ENCODE measurements at regions of chr5 and their contacts with region 1.

Region 1: DNA sequence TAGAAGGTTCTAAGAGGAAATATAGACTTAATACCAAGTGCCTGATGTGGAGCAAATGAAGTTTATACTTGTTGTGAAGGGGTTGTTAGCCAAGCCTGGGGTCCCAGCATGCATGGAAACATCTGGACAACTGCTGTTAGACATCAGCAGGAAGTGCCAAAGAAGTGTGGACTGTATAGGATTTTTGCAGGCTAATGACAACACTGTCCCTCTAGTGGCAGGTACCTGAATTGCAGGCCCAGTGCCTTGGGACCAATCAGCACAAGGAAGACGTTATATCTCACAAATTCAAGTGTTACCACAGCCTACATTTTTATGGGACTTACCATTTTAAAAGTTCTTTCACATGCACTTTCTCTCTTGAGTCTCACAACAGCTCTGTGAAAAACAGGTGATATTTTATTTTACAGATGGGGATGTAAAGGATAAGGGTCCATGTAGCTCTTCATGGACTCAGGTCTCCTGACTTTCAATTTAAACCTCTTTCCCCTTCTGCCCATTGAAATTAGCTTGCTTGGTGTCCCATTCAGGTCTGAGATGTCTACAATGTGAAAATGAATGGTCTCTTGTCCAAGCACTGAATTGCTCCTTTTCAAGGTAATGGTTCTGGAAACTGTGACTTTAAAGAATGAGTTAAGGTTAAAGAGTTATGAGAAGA is 89.0 kb upstream of the MAP1B start:
- DNase-seq: peak; percentile 74
- ATAC-seq: peak; percentile 73; the same call in 1 of the 2 replicates
- H3K4me3 ChIP-seq: no peak overlapping the region
- H3K27ac ChIP-seq: no peak overlapping the region
- H3K4me1 ChIP-seq: no peaks in the 10 kb centered on the region
- H3K27me3 ChIP-seq: no peaks in the 10 kb centered on the region
- CTCF ChIP-seq: peak; percentile 88

Region 2: GRCh38 chr5:71782771-71783770 is 235.2 kb before region 1 on chr5:
- CTCF ChIA-PET with region 1: no interaction called
- POLR2A ChIA-PET with region 1: no interaction called
- intact Hi-C with region 1: loop called (anchors 2 kb)
- DNase-seq: peak; percentile 81
- ATAC-seq: peak; percentile 81
- H3K4me3 ChIP-seq: peak overlapping the region; percentile 63
- H3K27ac ChIP-seq: no peak overlapping the region
- H3K4me1 ChIP-seq: peaks cover 5% of the 10 kb centered on the region; the same call in 1 of the 2 replicates
- H3K27me3 ChIP-seq: no peaks in the 10 kb centered on the region
- CTCF ChIP-seq: peak; percentile 85

Region 3: GRCh38 chr5:71828291-71829040 is 189.8 kb before region 1 on chr5:
- CTCF ChIA-PET with region 1: no interaction called
- POLR2A ChIA-PET with region 1: no interaction called
- intact Hi-C with region 1: no loop called
- DNase-seq: peak; percentile 64
- ATAC-seq: peak; percentile 41; the same call in 1 of the 2 replicates
- H3K4me3 ChIP-seq: no peak overlapping the region
- H3K27ac ChIP-seq: peak overlapping the region; percentile 53
- H3K4me1 ChIP-seq: peaks cover 28% of the 10 kb centered on the region
- H3K27me3 ChIP-seq: no peaks in the 10 kb centered on the region
- CTCF ChIP-seq: no peak

Region 4: GRCh38 chr5:71938895-71939294 is 79.4 kb before region 1 on chr5:
- CTCF ChIA-PET with region 1: interaction called, 4 read pairs
- POLR2A ChIA-PET with region 1: no interaction called
- intact Hi-C with region 1: loop called (anchors 5 kb)
- DNase-seq: peak; percentile 75
- ATAC-seq: peak; percentile 95
- H3K4me3 ChIP-seq: peak overlapping the region; percentile 1; the same call in 1 of the 2 replicates
- H3K27ac ChIP-seq: peak overlapping the region; percentile 36
- H3K4me1 ChIP-seq: peaks cover 9% of the 10 kb centered on the region
- H3K27me3 ChIP-seq: no peaks in the 10 kb centered on the region
- CTCF ChIP-seq: no peak

Region 5: DNA sequence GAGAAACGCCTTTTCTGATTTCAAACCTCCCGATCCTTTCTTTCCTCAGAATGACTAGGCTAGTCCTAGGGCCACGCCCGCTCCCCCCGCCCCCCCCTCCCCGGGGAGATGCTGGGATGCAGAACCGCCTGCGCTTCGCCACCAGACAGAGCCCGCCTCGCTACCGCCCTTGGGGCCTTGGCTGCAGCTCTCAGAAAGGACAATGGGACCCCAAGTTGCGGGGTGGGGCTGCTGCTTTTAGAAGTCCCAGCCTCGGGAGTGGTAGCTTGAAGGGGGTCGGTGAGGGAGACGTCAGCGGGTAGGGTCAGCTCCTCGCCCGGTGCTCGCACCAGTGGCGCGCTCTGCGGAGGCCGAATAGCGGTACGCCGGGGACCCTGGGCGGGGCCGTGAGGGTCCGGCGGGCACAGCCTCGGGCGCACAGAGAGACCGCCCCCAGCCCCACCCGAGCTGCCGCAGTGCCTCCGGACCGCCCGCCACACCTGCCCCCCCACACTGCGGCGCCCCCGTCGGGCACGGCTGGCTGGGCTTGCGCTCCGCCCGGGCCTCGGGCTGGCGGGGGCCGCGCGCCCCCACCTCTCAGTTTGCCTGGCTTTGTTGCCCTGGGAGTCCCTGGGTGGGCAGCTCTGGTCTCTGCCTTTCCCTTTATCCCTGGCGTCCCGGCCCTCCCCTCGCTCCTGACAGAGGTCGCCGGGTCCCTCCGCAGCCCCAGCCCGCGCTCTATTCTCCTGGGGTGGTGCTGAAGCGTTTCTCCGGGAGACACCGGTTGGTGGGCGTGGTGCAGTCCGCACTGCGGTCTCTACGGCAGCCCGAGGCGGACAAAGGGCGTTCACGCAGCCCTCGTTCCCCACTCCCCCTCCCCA is 90.2 kb after region 1 on chr5:
- CTCF ChIA-PET with region 1: no interaction called
- POLR2A ChIA-PET with region 1: no interaction called
- intact Hi-C with region 1: loop called (anchors 10 kb)
- DNase-seq: peak; percentile 55
- ATAC-seq: peak; percentile 77
- H3K4me3 ChIP-seq: peak overlapping the region; percentile 90
- H3K27ac ChIP-seq: no peak overlapping the region
- H3K4me1 ChIP-seq: peaks cover 5% of the 10 kb centered on the region; the same call in 1 of the 2 replicates
- H3K27me3 ChIP-seq: no peaks in the 10 kb centered on the region
- CTCF ChIP-seq: no peak

Measured in PC-3 (cell line).